Esophagus muscularis mucosa (tissue), 4 donors: ENCODE measurements at regions of chr1 and their contacts with region 1.

Region 1: GRCh38 chr1:236552901-236553300 is 29.1 kb downstream of the LGALS8 start:
- DNase-seq: no peak
- H3K4me3 ChIP-seq: no peak overlapping the region
- H3K27ac ChIP-seq: no peak overlapping the region
- H3K4me1 ChIP-seq: no peaks in the 10 kb centered on the region
- H3K27me3 ChIP-seq: no peaks in the 10 kb centered on the region
- CTCF ChIP-seq: no peak
- EP300 ChIP-seq: no peak
- POLR2A ChIP-seq: no peak

Region 2: DNA sequence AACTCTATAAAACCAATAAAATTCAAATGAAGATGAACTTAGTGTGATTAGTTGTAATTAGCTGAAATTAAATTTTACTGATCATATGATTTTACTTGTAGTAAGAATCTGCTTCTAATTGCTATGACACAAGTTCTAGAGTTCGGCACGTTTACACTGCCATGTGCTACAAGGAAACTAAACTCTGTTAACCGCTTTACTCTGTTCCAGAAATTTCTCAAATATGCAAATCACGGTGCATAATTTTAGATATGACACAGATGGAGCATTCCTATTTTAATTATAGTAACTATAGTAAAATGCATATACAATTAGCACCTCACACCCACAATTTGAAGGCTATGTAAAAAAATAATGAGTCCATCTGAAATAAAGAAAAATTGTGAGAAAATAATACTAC is 36.6 kb after region 1 on chr1:
- intact Hi-C with region 1: loop called (anchors 5 kb)
- DNase-seq: no peak
- H3K4me3 ChIP-seq: no peak overlapping the region
- H3K27ac ChIP-seq: no peak overlapping the region
- H3K4me1 ChIP-seq: no peaks in the 10 kb centered on the region
- H3K27me3 ChIP-seq: no peaks in the 10 kb centered on the region
- CTCF ChIP-seq: no peak
- EP300 ChIP-seq: no peak
- POLR2A ChIP-seq: no peak

Region 3: DNA sequence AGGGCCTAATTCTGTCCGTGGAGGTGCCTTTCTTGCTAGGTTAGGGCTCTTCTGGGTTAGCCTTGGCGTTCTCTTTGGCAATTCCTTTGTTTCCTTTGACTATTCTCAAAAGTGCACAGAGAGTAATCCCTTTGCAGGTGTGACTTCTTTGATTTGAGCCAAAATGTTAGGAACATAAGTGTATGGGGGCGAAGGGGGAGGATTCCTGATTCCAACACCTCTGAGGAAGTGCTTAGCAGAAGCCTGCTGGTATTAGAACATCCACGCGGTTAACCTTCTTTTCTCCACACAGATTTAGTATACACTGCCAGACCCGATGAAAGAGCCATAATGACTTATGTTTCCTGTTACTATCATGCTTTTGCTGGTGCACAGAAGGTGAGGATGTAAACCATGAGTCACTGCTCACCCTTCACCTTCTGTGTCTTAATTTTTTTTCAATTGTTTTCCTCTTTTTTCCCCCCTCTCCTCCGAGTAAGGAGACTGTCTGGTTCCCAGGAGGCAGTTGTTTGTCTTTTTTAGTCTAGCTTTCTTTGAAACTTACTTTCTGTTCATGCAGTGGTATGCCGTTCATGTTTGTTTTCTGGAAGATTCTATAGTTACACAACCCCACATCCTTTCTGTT is 181.4 kb after region 1 on chr1:
- intact Hi-C with region 1: no loop called
- DNase-seq: no peak
- H3K4me3 ChIP-seq: no peak overlapping the region
- H3K27ac ChIP-seq: no peak overlapping the region
- H3K4me1 ChIP-seq: peaks cover 0 to 6% (median 0%) of the 10 kb centered on the region in 4 donors
- H3K27me3 ChIP-seq: no peaks in the 10 kb centered on the region
- CTCF ChIP-seq: no peak
- EP300 ChIP-seq: no peak
- POLR2A ChIP-seq: no peak